ENCODE measurements at regions of chr14 and their contacts with region 1.

Region 1: DNA sequence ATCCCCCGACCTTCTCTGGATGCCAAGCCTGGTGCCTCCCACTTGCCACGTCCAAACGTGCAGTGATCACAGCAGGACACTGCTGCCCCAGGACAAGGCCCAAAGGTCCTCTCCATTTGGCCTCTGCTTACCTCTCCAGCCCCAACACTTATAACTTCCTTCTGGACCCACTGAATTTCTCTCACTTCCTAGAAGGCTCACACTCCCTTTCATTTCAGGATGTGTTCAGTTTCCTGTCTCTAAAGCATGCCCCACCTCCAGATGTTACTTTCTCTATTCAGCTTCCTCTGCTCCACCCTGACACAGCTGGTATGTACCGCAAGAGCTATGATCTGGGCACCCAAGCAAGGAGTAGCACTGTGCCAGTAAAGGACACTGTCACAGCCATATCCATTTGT is 33.0 kb downstream of the CDKL1 start:
- DNase-seq: peak; percentile 89
- H3K4me3 Mint-ChIP-seq: peak overlapping the region; percentile 86
- H3K27ac Mint-ChIP-seq: peak overlapping the region; percentile 93
- H3K4me1 Mint-ChIP-seq: peaks cover 22% of the 10 kb centered on the region
- H3K27me3 Mint-ChIP-seq: no peaks in the 10 kb centered on the region

Region 2: DNA sequence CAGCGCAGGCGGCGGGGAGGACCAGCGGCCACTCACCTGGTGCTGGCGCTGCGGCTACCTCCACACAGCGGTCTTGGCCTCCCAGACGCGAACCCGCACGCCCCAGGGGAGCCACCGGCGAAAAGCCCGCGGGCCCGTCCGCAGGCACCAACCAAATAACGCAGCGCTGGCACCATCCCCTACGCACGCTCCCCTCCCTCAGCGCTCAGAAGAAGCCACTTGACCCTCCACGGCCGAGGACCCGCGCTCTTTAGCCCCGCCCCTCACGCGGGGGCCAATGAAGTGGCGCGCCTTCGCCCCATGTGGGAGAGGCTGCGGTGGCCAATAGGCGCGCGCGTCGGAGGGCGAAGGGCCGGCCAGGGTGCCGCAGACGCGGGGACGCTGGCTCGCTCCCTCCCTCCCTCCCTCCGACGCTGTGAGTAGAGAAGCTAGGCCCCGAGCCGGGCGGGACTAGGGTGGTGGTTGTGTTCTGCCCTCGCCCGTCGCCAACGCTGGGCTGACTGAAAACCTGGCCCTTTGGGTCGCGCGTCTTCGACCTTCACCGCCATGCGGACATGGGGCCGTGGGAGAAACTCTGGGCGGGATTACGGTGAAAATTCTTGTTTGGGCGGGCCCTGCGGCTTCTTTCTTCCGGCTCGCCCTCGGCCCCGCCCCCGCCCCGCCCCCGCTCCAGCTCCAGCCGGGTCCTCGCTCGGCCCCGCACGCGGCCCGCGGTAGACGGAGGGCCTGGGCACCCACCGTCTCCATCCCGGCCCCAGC is 51.6 kb before region 1 on chr14 and contains the starts of genes DMAC2L and L2HGDH:
- intact Hi-C with region 1: loop called (anchors 2 kb)
- DNase-seq: peak; percentile 98
- H3K4me3 Mint-ChIP-seq: peak within 1 kb of the TSS; percentile 96
- H3K27ac Mint-ChIP-seq: peak within 1 kb of the TSS; percentile 99
- H3K4me1 Mint-ChIP-seq: peaks cover 39% of the 10 kb centered on the region
- H3K27me3 Mint-ChIP-seq: no peaks in the 10 kb centered on the region
- total RNA-seq, gene DMAC2L: 16.3 and 18.8 TPM in 2 replicates
- total RNA-seq, gene L2HGDH: 16.8 and 18.0 TPM in 2 replicates

Region 3: GRCh38 chr14:50396631-50397390 is 33.1 kb after region 1 on chr14 and contains the start of gene CDKL1:
- intact Hi-C with region 1: loop called (anchors 1 kb)
- DNase-seq: peak; percentile 84
- H3K4me3 Mint-ChIP-seq: peak within 1 kb of the TSS; percentile 88
- H3K27ac Mint-ChIP-seq: peak within 1 kb of the TSS; percentile 88
- H3K4me1 Mint-ChIP-seq: peaks cover 16% of the 10 kb centered on the region
- H3K27me3 Mint-ChIP-seq: peaks cover 20% of the 10 kb centered on the region
- total RNA-seq, gene CDKL1: 4.8 and 5.7 TPM in 2 replicates